ENCODE measurements at regions of chr7 and their contacts with region 1.

Region 1: GRCh38 chr7:44587843-44588711 is 6.0 kb upstream of the TMED4 start:
- DNase-seq: peak; percentile 69 to 74
- H3K4me3 ChIP-seq: no peak overlapping the region
- H3K27ac ChIP-seq: no peak overlapping the region
- H3K4me1 ChIP-seq: peaks cover 11% of the 10 kb centered on the region
- H3K27me3 ChIP-seq: no peaks in the 10 kb centered on the region
- CTCF ChIP-seq: peak; percentile 95

Region 2: DNA sequence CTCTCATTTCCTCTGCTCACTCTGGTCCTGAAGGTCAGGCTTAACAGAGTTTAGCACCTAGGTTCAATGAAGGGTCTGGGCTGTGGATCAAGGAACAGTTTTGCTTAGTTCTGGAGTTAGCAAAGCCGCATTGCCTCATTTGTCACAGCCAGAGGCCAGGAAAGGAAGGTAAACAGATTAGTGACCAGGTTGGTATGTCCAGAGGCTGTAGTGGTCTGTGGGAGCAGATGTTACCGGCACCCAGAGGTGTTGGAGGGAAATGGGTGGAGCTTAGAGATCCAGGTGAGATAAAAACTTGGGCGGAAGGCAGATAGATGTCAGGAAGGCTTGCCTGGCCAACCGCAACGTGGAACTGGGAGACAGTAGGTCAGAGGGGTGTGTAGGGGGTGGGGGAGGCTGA is 123.9 kb after region 1 on chr7:
- CTCF ChIA-PET with region 1: no interaction called
- POLR2A ChIA-PET with region 1: interaction called, 42 read pairs
- intact Hi-C with region 1: no loop called
- DNase-seq: peak; percentile 87 to 97
- H3K4me3 ChIP-seq: no peak overlapping the region
- H3K27ac ChIP-seq: peak overlapping the region; percentile 69
- H3K4me1 ChIP-seq: peaks cover 52% of the 10 kb centered on the region
- H3K27me3 ChIP-seq: no peaks in the 10 kb centered on the region
- CTCF ChIP-seq: no peak

Region 3: GRCh38 chr7:44797329-44798251 is 209.5 kb after region 1 on chr7:
- CTCF ChIA-PET with region 1: no interaction called
- POLR2A ChIA-PET with region 1: no interaction called
- intact Hi-C with region 1: loop called (anchors 2 kb)
- DNase-seq: peak; percentile 87
- H3K4me3 ChIP-seq: peak overlapping the region; percentile 67
- H3K27ac ChIP-seq: peak overlapping the region; percentile 93
- H3K4me1 ChIP-seq: peaks cover 26% of the 10 kb centered on the region
- H3K27me3 ChIP-seq: no peaks in the 10 kb centered on the region
- CTCF ChIP-seq: peak; percentile 79; the same call in 1 of the 2 replicates

Region 4: GRCh38 chr7:45136106-45137060 is 548.3 kb after region 1 on chr7:
- CTCF ChIA-PET with region 1: no interaction called
- POLR2A ChIA-PET with region 1: no interaction called
- intact Hi-C with region 1: loop called (anchors 1 kb)
- DNase-seq: peak; percentile 63 to 74
- H3K4me3 ChIP-seq: no peak overlapping the region
- H3K27ac ChIP-seq: no peak overlapping the region
- H3K4me1 ChIP-seq: 0 out of 2 replicates have a peak, but pooled peaks cover 3% of the 10 kb centered on the region
- H3K27me3 ChIP-seq: no peaks in the 10 kb centered on the region
- CTCF ChIP-seq: peak; percentile 98

Region 5: GRCh38 chr7:45962861-45963260 is 1374.8 kb after region 1 on chr7:
- CTCF ChIA-PET with region 1: no interaction called
- POLR2A ChIA-PET with region 1: no interaction called
- intact Hi-C with region 1: no loop called
- DNase-seq: no peak
- H3K4me3 ChIP-seq: no peak overlapping the region
- H3K27ac ChIP-seq: no peak overlapping the region
- H3K4me1 ChIP-seq: no peaks in the 10 kb centered on the region
- H3K27me3 ChIP-seq: no peaks in the 10 kb centered on the region
- CTCF ChIP-seq: no peak

Measured in PC-9 (cell line).